Mammary epithelial cell (primary cell): ENCODE measurements at regions of chr2 and their contacts with region 1.

Region 1: GRCh38 chr2:108884619-108885018 is 98.0 kb downstream of the CCDC138 start:
- DNase-seq: peak; percentile 35
- H3K4me3 ChIP-seq: no peak overlapping the region
- H3K27ac ChIP-seq: no peak overlapping the region
- H3K4me1 ChIP-seq: peaks cover 4% of the 10 kb centered on the region
- H3K27me3 ChIP-seq: no peaks in the 10 kb centered on the region
- CTCF ChIP-seq: no peak

Region 2: GRCh38 chr2:108841506-108841905 is 43.1 kb before region 1 on chr2:
- CTCF ChIA-PET with region 1: no interaction called
- dilution Hi-C with region 1: loop called (anchors 5 kb)
- in situ Hi-C with region 1: no loop called
- intact Hi-C with region 1: no loop called
- DNase-seq: no peak
- H3K4me3 ChIP-seq: no peak overlapping the region
- H3K27ac ChIP-seq: no peak overlapping the region
- H3K4me1 ChIP-seq: no peaks in the 10 kb centered on the region
- H3K27me3 ChIP-seq: no peaks in the 10 kb centered on the region
- CTCF ChIP-seq: no peak

Region 3: DNA sequence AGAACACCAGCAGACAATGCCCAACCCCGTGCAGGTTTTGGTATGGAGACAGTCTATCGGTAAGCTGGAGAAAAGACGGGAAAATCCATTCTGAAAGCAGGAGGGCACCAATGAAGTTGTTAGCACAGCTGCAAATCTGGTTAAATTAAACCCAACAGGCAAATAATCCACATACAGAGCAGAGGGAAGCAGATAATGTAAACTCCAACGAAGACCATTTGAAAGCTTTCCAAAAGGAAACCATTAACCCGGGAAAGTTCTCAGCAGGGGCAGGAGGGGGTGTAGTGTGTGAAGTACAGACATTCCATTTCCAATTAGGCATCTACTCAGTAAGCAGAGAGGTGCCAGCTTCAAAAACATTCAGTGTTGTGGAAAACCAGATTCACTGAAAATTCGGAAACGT is 94.1 kb after region 1 on chr2:
- CTCF ChIA-PET with region 1: no interaction called
- dilution Hi-C with region 1: loop called (anchors 5 kb)
- in situ Hi-C with region 1: no loop called
- intact Hi-C with region 1: no loop called
- DNase-seq: no peak
- H3K4me3 ChIP-seq: no peak overlapping the region
- H3K27ac ChIP-seq: no peak overlapping the region
- H3K4me1 ChIP-seq: no peaks in the 10 kb centered on the region
- H3K27me3 ChIP-seq: peaks cover 4% of the 10 kb centered on the region
- CTCF ChIP-seq: no peak